GM12878 (cell line): ENCODE measurements at regions of chr20 and their contacts with region 1.

Region 1: GRCh38 chr20:2523919-2524708 is 12.3 kb upstream of the TMC2 start:
- DNase-seq: peak; percentile 25
- ATAC-seq: peak; percentile 89
- H3K4me3 ChIP-seq: peak overlapping the region; percentile 87
- H3K27ac ChIP-seq: peak overlapping the region; percentile 43; the same call in 1 of the 2 replicates
- H3K4me1 ChIP-seq: 0 out of 2 replicates have a peak, but pooled peaks cover 3% of the 10 kb centered on the region
- H3K27me3 ChIP-seq: no peaks in the 10 kb centered on the region
- CTCF ChIP-seq: peak; percentile 88 to 95 (median 91)
- EP300 ChIP-seq: no peak
- POLR2A ChIP-seq: peak; percentile 84
- RAD21 ChIP-seq: peak; percentile 31; the same call in 1 of the 2 replicates

Region 2: GRCh38 chr20:2451939-2452732 is 72.0 kb before region 1 on chr20:
- CTCF ChIA-PET with region 1: interaction called, 15 read pairs
- POLR2A ChIA-PET with region 1: no interaction called
- RAD21 ChIA-PET with region 1: no interaction called
- SMC1A ChIA-PET with region 1: interaction called, 3 read pairs
- in situ Hi-C with region 1: no loop called
- intact Hi-C with region 1: no loop called
- DNase-seq: no peak
- ATAC-seq: peak; percentile 80
- H3K4me3 ChIP-seq: no peak overlapping the region
- H3K27ac ChIP-seq: no peak overlapping the region
- H3K4me1 ChIP-seq: no peaks in the 10 kb centered on the region
- H3K27me3 ChIP-seq: no peaks in the 10 kb centered on the region
- CTCF ChIP-seq: peak; percentile 76 to 89 (median 87)
- EP300 ChIP-seq: no peak
- POLR2A ChIP-seq: no peak
- RAD21 ChIP-seq: peak; percentile 69

Region 3: GRCh38 chr20:2476742-2477615 is 47.1 kb before region 1 on chr20:
- CTCF ChIA-PET with region 1: interaction called, 49 read pairs
- POLR2A ChIA-PET with region 1: interaction called, 3 read pairs
- RAD21 ChIA-PET with region 1: no interaction called
- SMC1A ChIA-PET with region 1: interaction called, 4 read pairs
- in situ Hi-C with region 1: no loop called
- intact Hi-C with region 1: no loop called
- DNase-seq: no peak
- ATAC-seq: peak; percentile 54; the same call in 1 of the 3 replicates
- H3K4me3 ChIP-seq: no peak overlapping the region
- H3K27ac ChIP-seq: no peak overlapping the region
- H3K4me1 ChIP-seq: no peaks in the 10 kb centered on the region
- H3K27me3 ChIP-seq: no peaks in the 10 kb centered on the region
- CTCF ChIP-seq: peak; percentile 17 to 37 (median 21); a peak in 2 of 6 replicates
- EP300 ChIP-seq: no peak
- POLR2A ChIP-seq: no peak
- RAD21 ChIP-seq: no peak

Region 4: DNA sequence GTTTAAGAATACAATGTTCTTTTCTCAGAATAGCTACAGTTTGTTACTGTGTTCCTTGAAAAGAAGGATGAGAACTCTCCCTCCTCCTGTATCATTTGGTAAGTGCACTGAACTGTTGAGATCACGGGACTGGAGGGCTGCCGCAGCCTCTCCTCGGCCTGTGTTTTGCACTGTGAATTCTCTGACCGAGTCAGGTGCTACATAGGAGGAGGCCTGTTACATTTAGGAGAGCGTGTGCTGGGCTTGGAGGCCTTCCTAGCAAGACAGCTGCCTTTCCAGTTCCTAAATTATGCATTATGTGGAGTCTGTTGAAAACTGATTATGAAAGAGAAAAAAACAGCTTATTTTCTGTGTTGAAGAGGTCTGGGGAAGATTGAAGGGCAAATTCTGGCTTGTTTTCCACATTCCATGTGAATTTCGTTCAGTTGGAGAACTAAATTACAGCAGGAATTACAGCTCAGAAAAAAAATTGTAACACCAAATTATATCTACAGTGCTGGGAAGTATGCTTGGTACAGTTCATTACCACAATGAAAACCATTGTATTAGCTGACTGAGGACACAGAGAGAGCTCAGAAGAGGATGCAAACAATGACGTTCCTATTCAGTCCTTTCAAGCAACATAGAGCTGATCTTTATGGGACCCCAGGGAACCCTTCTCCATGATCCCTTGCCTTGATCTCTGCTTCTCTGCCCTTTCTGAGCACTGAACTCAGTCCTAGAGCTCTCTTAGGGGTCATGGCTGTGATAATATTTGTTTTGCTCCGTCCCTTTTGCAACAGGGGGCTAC is 15.0 kb after region 1 on chr20:
- CTCF ChIA-PET with region 1: interaction called, 10 read pairs
- POLR2A ChIA-PET with region 1: interaction called, 4 read pairs
- RAD21 ChIA-PET with region 1: no interaction called
- SMC1A ChIA-PET with region 1: interaction called, 5 read pairs
- in situ Hi-C with region 1: no loop called
- intact Hi-C with region 1: no loop called
- DNase-seq: no peak
- ATAC-seq: no peak
- H3K4me3 ChIP-seq: no peak overlapping the region
- H3K27ac ChIP-seq: no peak overlapping the region
- H3K4me1 ChIP-seq: no peaks in the 10 kb centered on the region
- H3K27me3 ChIP-seq: peaks cover 0 to 3% of the 10 kb centered on the region in 2 experiments; a peak in 2 of 4 replicates
- CTCF ChIP-seq: no peak
- EP300 ChIP-seq: no peak
- POLR2A ChIP-seq: no peak
- RAD21 ChIP-seq: no peak

Region 5: DNA sequence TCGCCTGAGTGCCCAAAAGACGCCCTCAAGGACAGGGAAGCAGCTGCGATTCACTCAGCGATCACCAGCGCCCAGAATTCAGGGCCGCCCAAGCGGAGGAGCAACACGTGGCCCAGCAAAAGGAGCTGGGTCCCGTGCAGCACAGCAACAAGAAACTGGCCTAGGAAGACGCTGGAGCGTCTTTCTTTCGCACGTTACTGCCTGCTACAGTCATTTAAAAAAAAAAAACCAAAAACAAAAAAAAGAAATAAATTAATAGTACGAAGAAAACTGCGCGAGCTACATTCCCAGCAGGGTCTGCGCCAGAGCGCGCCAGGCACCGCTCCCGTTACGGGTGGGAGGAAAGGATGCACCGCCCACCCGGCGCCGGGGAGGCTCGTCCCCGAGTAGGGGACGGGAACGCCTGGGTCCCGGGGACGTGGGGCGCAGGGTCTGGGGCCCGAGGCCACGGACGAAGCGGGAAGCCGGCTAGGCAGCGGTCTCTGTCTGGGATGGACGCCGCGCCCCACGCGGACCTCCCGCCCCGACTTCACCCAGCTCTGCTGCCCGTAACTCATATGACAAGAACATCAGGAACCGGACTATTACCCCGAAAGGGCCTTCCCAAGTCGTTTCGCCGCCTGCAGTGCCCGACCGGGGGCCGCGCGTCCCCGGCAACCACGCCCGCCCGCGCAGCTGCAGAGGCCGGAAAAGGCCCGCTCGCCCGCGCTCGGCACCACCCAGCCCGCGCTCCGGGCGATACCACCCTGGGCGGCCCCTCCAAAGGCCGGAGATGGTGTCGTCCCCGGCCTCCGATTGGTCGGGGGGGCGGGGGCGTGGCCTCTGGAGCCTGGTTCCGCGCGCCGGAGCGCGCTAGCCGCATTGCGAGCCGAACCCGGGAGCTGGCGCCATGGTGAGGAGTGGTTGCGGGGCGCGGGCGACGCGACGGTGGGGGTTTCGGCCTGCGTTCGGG is 127.9 kb after region 1 on chr20 and contains the start of gene NOP56:
- CTCF ChIA-PET with region 1: interaction called, 13 read pairs
- POLR2A ChIA-PET with region 1: interaction called, 4 read pairs
- RAD21 ChIA-PET with region 1: interaction called, 8 read pairs
- SMC1A ChIA-PET with region 1: interaction called, 7 read pairs
- in situ Hi-C with region 1: no loop called
- intact Hi-C with region 1: loop called (anchors 2 kb)
- DNase-seq: peak; percentile 45
- ATAC-seq: peak; percentile 94
- H3K4me3 ChIP-seq: peak within 1 kb of the TSS; percentile 95
- H3K27ac ChIP-seq: peak within 1 kb of the TSS; percentile 84
- H3K4me1 ChIP-seq: peaks cover 13% of the 10 kb centered on the region
- H3K27me3 ChIP-seq: no peaks in the 10 kb centered on the region
- CTCF ChIP-seq: no peak
- EP300 ChIP-seq: no peak
- POLR2A ChIP-seq: peak; percentile 100
- RAD21 ChIP-seq: no peak
- polyA plus RNA-seq, gene NOP56: 368 to 439 TPM

Region 6: GRCh38 chr20:2688041-2688591 is 164.0 kb after region 1 on chr20:
- CTCF ChIA-PET with region 1: no interaction called
- POLR2A ChIA-PET with region 1: no interaction called
- RAD21 ChIA-PET with region 1: no interaction called
- SMC1A ChIA-PET with region 1: no interaction called
- in situ Hi-C with region 1: no loop called
- intact Hi-C with region 1: no loop called
- DNase-seq: no peak
- ATAC-seq: peak; percentile 75
- H3K4me3 ChIP-seq: no peak overlapping the region
- H3K27ac ChIP-seq: no peak overlapping the region
- H3K4me1 ChIP-seq: no peaks in the 10 kb centered on the region
- H3K27me3 ChIP-seq: peaks cover 7 to 10% of the 10 kb centered on the region in 2 experiments
- CTCF ChIP-seq: peak; percentile 57 to 62 (median 57)
- EP300 ChIP-seq: no peak
- POLR2A ChIP-seq: no peak
- RAD21 ChIP-seq: peak; percentile 69

Region 7: GRCh38 chr20:3115190-3116107 is 591.3 kb after region 1 on chr20:
- CTCF ChIA-PET with region 1: no interaction called
- POLR2A ChIA-PET with region 1: no interaction called
- RAD21 ChIA-PET with region 1: no interaction called
- SMC1A ChIA-PET with region 1: no interaction called
- in situ Hi-C with region 1: no loop called
- intact Hi-C with region 1: no loop called
- DNase-seq: peak; percentile 2
- ATAC-seq: peak; percentile 71
- H3K4me3 ChIP-seq: no peak overlapping the region
- H3K27ac ChIP-seq: no peak overlapping the region
- H3K4me1 ChIP-seq: no peaks in the 10 kb centered on the region
- H3K27me3 ChIP-seq: no peaks in the 10 kb centered on the region
- CTCF ChIP-seq: peak; percentile 67 to 74 (median 70)
- EP300 ChIP-seq: no peak
- POLR2A ChIP-seq: no peak
- RAD21 ChIP-seq: peak; percentile 65